ENCODE measurements at regions of chr19 and their contacts with region 1.

Region 1: GRCh38 chr19:46840136-46840942 is 10.3 kb downstream of the AP2S1 start:
- DNase-seq: no peak
- H3K27ac ChIP-seq: peak overlapping the region; percentile 70
- CTCF ChIP-seq: peak; percentile 90

Region 2: DNA sequence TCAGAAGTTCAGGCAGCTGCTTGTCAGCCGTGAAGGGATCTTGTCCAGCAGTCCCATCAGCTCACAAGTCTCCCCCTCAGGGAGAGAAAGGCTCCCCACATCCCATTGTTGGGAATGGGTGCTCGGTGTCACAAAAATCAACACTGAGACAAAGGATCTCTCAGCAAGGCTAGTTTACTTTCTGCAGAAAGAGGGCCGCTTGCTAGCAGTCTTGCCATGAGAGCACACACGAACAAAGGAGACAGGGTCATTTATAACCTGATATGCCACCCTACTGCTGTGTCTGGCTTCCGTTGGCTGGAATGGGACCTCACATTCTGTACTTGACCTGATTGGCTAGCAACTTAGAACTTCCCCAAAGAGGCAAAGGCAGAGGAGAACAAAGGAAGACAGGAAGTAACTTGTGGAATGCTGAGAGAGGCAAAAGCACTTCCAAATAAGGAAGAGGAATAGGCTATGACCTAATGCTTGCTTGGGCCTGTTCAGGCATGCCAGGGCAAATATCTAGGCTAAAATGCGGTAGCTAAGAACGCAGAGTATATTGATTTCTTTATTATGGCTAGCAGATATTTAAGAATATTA is 707.1 kb before region 1 on chr19:
- CTCF ChIA-PET with region 1: no interaction called
- POLR2A ChIA-PET with region 1: no interaction called
- DNase-seq: peak; percentile 47
- H3K27ac ChIP-seq: peak overlapping the region; percentile 73
- CTCF ChIP-seq: no peak

Region 3: GRCh38 chr19:46746281-46747013 is 93.9 kb before region 1 on chr19 and contains the start of gene STRN4:
- CTCF ChIA-PET with region 1: interaction called, 14 read pairs
- POLR2A ChIA-PET with region 1: interaction called, 7 read pairs
- DNase-seq: peak; percentile 90
- H3K27ac ChIP-seq: peak within 1 kb of the TSS; percentile 84
- CTCF ChIP-seq: no peak

Region 4: DNA sequence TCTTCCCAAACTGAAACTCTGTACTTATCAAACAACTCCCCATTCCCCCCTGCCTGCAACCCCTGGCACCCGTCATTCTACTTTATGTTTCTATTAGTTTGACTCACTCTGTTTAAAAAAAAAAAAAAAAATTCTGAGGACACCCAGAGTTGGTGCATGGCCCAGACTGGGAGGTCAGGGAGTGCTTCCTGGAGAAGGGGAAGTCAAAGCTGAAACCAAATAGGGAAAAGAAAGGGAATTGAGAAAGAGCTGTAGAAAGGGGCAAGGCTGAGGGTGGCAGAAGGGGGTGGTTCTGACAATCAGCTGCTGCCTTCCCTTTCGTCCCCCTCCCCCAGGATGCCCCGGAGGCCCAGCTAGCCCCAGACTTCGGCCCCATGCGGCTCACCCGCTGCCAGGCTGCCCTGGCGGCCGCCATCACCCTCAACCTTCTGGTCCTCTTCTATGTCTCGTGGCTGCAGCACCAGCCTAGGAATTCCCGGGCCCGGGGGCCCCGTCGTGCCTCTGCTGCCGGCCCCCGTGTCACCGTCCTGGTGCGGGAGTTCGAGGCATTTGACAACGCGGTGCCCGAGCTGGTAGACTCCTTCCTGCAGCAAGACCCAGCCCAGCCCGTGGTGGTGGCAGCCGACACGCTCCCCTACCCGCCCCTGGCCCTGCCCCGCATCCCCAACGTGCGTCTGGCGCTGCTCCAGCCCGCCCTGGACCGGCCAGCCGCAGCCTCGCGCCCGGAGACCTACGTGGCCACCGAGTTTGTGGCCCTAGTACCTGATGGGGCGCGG is 85.1 kb before region 1 on chr19:
- CTCF ChIA-PET with region 1: interaction called, 52 read pairs
- POLR2A ChIA-PET with region 1: interaction called, 4 read pairs
- DNase-seq: no peak
- H3K27ac ChIP-seq: peak overlapping the region; percentile 73
- CTCF ChIP-seq: no peak

Region 5: GRCh38 chr19:46788262-46788967 is 51.9 kb before region 1 on chr19 and contains the start of gene SLC1A5:
- CTCF ChIA-PET with region 1: interaction called, 18 read pairs
- POLR2A ChIA-PET with region 1: interaction called, 4 read pairs
- DNase-seq: peak; percentile 98
- H3K27ac ChIP-seq: peak within 1 kb of the TSS; percentile 99
- CTCF ChIP-seq: no peak

Measured in RWPE1 (cell line).